ENCODE measurements at regions of chr12 and their contacts with region 1.

Region 1: DNA sequence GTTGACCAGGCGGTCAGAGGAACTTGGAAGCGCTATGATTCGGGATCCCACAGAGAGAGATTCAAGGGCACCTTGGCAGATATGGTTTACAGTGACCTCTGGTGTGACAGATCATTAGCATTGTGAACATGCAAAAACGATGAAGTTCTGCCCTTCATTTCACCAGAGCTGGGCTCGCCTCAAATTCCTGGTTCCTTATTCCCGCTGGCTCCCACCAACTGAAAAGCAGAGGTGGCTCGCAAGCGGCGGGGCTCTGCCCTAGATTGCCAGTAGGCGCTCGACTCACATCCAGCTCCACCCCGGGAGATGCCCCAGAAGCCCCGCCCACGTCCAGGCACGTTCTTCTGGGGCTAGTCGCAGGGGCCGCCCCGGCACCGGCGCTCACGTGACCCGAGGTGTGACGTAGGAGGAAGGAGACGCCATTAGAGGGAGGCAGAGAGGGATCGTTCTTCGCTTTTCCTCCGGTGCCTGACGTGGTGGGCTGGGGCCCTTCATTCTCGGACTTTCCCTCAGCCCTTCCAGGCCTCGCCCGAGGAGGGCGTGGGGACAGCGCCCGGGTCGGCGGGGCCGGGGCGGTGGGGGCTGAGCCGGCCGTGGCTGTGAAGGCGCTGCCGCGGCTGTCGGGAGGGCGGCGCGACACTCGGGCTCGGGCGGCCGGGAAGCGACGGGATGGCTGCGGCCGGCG is at the start of gene RAB21:
- DNase-seq: peak; percentile 95 to 99 (median 97)
- ATAC-seq: peak; percentile 94
- H3K4me3 ChIP-seq: peak within 1 kb of the TSS; percentile 70
- H3K4me3 Mint-ChIP-seq: peak within 1 kb of the TSS; percentile 86 to 95 (median 94)
- H3K27ac ChIP-seq: peak within 1 kb of the TSS; percentile 100
- H3K27ac Mint-ChIP-seq: peak within 1 kb of the TSS; percentile 91 to 98 (median 95)
- H3K4me1 ChIP-seq: peaks cover 10 to 11% of the 10 kb centered on the region in 2 donors
- H3K4me1 Mint-ChIP-seq: peaks cover 21 to 47% (median 43%) of the 10 kb centered on the region in 7 donors
- H3K27me3 ChIP-seq: no peaks in the 10 kb centered on the region
- H3K27me3 Mint-ChIP-seq: peaks cover 0 to 32% (median 5%) of the 10 kb centered on the region in 5 donors
- total RNA-seq, gene RAB21: 53.6 to 81.7 (median 73.7) TPM

Region 2: GRCh38 chr12:71685914-71686665 is 68.5 kb before region 1 on chr12 and contains the start of gene TMEM19:
- CTCF ChIA-PET with region 1: no interaction called
- POLR2A ChIA-PET with region 1: interaction called, 24 read pairs
- intact Hi-C with region 1: loop called (anchors 1 kb)
- DNase-seq: peak; percentile 78 to 88 (median 86)
- ATAC-seq: peak; percentile 90
- H3K4me3 ChIP-seq: peak within 1 kb of the TSS; percentile 96
- H3K4me3 Mint-ChIP-seq: peak within 1 kb of the TSS; percentile 85 to 99 (median 94)
- H3K27ac ChIP-seq: peak within 1 kb of the TSS; percentile 87
- H3K27ac Mint-ChIP-seq: peak within 1 kb of the TSS; percentile 85 to 97 (median 91)
- H3K4me1 ChIP-seq: peaks cover 21 to 23% of the 10 kb centered on the region in 2 donors
- H3K4me1 Mint-ChIP-seq: peaks cover 15 to 55% (median 38%) of the 10 kb centered on the region in 7 donors
- H3K27me3 ChIP-seq: no peaks in the 10 kb centered on the region
- H3K27me3 Mint-ChIP-seq: no peaks in the 10 kb centered on the region
- total RNA-seq, gene TMEM19: 13.9 to 17.7 (median 14.7) TPM

Region 3: GRCh38 chr12:71719615-71720370 is 34.8 kb before region 1 on chr12:
- CTCF ChIA-PET with region 1: no interaction called
- POLR2A ChIA-PET with region 1: no interaction called
- intact Hi-C with region 1: no loop called
- DNase-seq: no peak
- ATAC-seq: no peak
- H3K4me3 ChIP-seq: no peak overlapping the region
- H3K4me3 Mint-ChIP-seq: no peak overlapping the region
- H3K27ac ChIP-seq: no peak overlapping the region
- H3K27ac Mint-ChIP-seq: no peak overlapping the region
- H3K4me1 ChIP-seq: no peaks in the 10 kb centered on the region
- H3K4me1 Mint-ChIP-seq: no peaks in the 10 kb centered on the region
- H3K27me3 ChIP-seq: no peaks in the 10 kb centered on the region
- H3K27me3 Mint-ChIP-seq: peaks cover 0 to 20% (median 2%) of the 10 kb centered on the region in 5 donors

Region 4: GRCh38 chr12:71766202-71766601 is 11.6 kb after region 1 on chr12:
- CTCF ChIA-PET with region 1: no interaction called
- POLR2A ChIA-PET with region 1: interaction called, 8 read pairs
- intact Hi-C with region 1: loop called in 1 of 2 experiments (anchors 1 kb)
- DNase-seq: no peak
- ATAC-seq: no peak
- H3K4me3 ChIP-seq: no peak overlapping the region
- H3K4me3 Mint-ChIP-seq: peak overlapping the region in 3 of 10 donors; percentile 16 to 70 (median 34)
- H3K27ac ChIP-seq: no peak overlapping the region
- H3K27ac Mint-ChIP-seq: peak overlapping the region in 3 of 9 donors; percentile 6 to 40 (median 38)
- H3K4me1 ChIP-seq: peaks cover 14 to 23% of the 10 kb centered on the region in 2 donors
- H3K4me1 Mint-ChIP-seq: peaks cover 23 to 71% (median 64%) of the 10 kb centered on the region in 7 donors
- H3K27me3 ChIP-seq: no peaks in the 10 kb centered on the region
- H3K27me3 Mint-ChIP-seq: no peaks in the 10 kb centered on the region

Region 5: GRCh38 chr12:71772735-71773134 is 18.1 kb after region 1 on chr12:
- CTCF ChIA-PET with region 1: no interaction called
- POLR2A ChIA-PET with region 1: interaction called, 8 read pairs
- intact Hi-C with region 1: loop called in 1 of 2 experiments (anchors 2 kb)
- DNase-seq: no peak
- ATAC-seq: peak; percentile 53
- H3K4me3 ChIP-seq: no peak overlapping the region
- H3K4me3 Mint-ChIP-seq: no peak overlapping the region
- H3K27ac ChIP-seq: no peak overlapping the region
- H3K27ac Mint-ChIP-seq: peak overlapping the region in 2 of 9 donors; percentile 18 to 45
- H3K4me1 ChIP-seq: peaks cover under 1% of the 10 kb centered on the region in 2 donors
- H3K4me1 Mint-ChIP-seq: peaks cover 9 to 32% (median 19%) of the 10 kb centered on the region in 7 donors
- H3K27me3 ChIP-seq: no peaks in the 10 kb centered on the region
- H3K27me3 Mint-ChIP-seq: no peaks in the 10 kb centered on the region

Region 6: GRCh38 chr12:71857657-71858056 is 103.1 kb after region 1 on chr12:
- CTCF ChIA-PET with region 1: no interaction called
- POLR2A ChIA-PET with region 1: no interaction called
- intact Hi-C with region 1: no loop called
- DNase-seq: no peak
- ATAC-seq: no peak
- H3K4me3 ChIP-seq: no peak overlapping the region
- H3K4me3 Mint-ChIP-seq: peak overlapping the region in 1 of 10 donors; percentile 5
- H3K27ac ChIP-seq: no peak overlapping the region
- H3K27ac Mint-ChIP-seq: peak overlapping the region in 2 of 9 donors; percentile 10 to 48
- H3K4me1 ChIP-seq: no peaks in the 10 kb centered on the region
- H3K4me1 Mint-ChIP-seq: peaks cover 20 to 91% (median 75%) of the 10 kb centered on the region in 7 donors
- H3K27me3 ChIP-seq: no peaks in the 10 kb centered on the region
- H3K27me3 Mint-ChIP-seq: no peaks in the 10 kb centered on the region

Region 7: DNA sequence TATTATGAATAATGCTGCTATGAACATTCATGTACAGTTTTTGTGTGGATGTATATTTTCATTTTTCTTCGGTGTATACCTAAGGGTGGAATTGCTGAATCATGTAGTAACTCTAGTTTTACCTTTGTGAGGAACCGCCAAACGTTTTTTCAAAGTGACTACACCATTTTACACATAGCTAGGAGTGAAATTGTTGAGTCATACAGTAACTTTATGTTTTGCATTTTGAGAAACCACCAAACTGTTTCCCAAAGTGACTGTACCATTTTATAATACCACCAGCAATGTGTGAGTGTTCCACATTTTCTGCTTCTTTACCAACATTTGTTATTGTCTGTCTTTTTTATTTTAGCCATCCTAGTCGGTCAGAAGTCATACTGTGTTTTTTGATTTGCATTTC is 181.0 kb after region 1 on chr12:
- CTCF ChIA-PET with region 1: no interaction called
- POLR2A ChIA-PET with region 1: no interaction called
- intact Hi-C with region 1: no loop called
- DNase-seq: no peak
- ATAC-seq: no peak
- H3K4me3 ChIP-seq: no peak overlapping the region
- H3K4me3 Mint-ChIP-seq: no peak overlapping the region
- H3K27ac ChIP-seq: no peak overlapping the region
- H3K27ac Mint-ChIP-seq: no peak overlapping the region
- H3K4me1 ChIP-seq: no peaks in the 10 kb centered on the region
- H3K4me1 Mint-ChIP-seq: peaks cover 0 to 9% (median 0%) of the 10 kb centered on the region in 7 donors
- H3K27me3 ChIP-seq: no peaks in the 10 kb centered on the region
- H3K27me3 Mint-ChIP-seq: peaks cover 36 to 60% (median 39%) of the 10 kb centered on the region in 5 donors

Measured in naive thymus-derived CD4-positive, alpha-beta T cell (primary cell).